ENCODE measurements at regions of chr2 and their contacts with region 1.

Region 1: DNA sequence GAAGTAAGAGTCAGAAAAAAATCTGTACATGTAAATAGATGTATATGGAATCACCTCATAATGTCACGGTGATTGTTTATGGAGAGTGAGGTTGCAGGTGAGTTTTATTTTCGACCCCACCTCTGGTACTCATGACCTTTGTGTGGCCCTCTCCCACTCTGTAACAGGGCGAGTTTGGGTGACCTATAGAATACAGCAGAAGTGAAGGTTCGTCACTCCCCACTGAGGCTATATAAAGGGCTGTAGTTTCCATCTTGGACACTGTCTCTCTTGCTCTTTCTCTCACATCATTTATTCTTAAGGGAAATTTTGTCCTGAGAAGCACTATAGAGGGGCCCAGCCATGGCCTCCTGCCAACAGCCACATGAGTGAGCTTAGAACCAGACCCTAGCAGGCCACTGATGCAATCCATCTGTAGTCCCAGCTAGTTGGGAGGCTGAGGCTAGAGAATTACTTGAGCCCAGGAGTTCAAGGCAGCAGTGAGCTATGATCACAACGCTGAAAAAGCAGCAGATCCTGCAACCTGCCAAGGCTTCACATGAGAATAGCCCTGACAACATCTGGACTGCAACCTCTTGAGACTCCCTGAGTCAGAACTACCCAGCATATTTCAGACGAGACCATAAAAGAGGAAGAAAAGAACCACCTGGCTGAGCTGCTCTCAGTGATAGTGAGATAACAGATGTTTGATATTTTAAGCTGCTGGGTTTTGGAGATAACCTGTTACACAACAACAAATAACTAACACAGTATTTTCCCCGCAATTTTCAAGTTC is 74.3 kb upstream of the SLC1A4 start:
- DNase-seq: no peak
- H3K4me3 ChIP-seq: no peak overlapping the region
- H3K27ac ChIP-seq: no peak overlapping the region
- H3K4me1 ChIP-seq: peaks cover 7% of the 10 kb centered on the region
- H3K27me3 ChIP-seq: no peaks in the 10 kb centered on the region
- CTCF ChIP-seq: no peak

Region 2: GRCh38 chr2:65035346-65035943 is 120.5 kb after region 1 on chr2:
- intact Hi-C with region 1: loop called (anchors 2 kb)
- DNase-seq: no peak
- H3K4me3 ChIP-seq: no peak overlapping the region
- H3K27ac ChIP-seq: no peak overlapping the region
- H3K4me1 ChIP-seq: peaks cover 4% of the 10 kb centered on the region
- H3K27me3 ChIP-seq: no peaks in the 10 kb centered on the region
- CTCF ChIP-seq: no peak

Region 3: GRCh38 chr2:65576861-65577601 is 662.1 kb after region 1 on chr2:
- intact Hi-C with region 1: loop called (anchors 10 kb)
- DNase-seq: no peak
- H3K4me3 ChIP-seq: no peak overlapping the region
- H3K27ac ChIP-seq: no peak overlapping the region
- H3K4me1 ChIP-seq: no peaks in the 10 kb centered on the region
- H3K27me3 ChIP-seq: no peaks in the 10 kb centered on the region
- CTCF ChIP-seq: no peak

Measured in colonic mucosa (tissue), 4 donors.